Left cardiac atrium (tissue), 4 donors: ENCODE measurements at regions of chr17 and their contacts with region 1.

Region 1: DNA sequence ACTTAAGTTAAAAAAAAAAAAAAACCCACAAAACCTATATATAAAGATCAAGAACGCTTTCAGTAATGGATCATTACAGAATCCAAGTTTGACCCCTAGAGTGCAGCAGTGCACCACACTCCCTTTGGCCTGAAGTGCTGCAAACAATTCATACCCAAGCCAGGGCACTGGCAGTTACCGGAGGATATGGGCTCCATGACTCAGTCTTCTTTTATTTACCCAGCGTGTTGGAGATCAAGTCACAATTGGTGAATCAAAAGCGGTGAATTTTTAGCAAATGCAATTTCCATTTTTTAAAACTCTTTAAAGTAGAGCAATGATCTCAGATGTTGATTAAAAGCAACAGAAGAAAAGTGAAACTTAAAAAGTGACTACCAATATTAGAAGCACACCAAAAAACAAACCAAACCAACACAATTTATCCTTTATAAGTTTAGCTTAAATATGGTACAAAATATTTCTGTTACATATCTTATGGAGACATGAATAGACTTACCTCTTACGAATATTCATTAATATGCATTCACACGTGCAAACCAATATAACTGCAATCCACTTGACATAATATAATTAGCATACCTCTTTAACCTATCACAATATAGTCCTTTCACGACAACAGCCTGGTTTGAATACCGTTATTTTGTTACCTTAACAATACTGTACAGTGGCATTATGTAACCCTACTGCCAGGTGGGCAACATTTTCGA is 46.3 kb downstream of the ZNF652 start:
- DNase-seq: peak; percentile 61
- ATAC-seq: peak; percentile 99

Region 2: GRCh38 chr17:49101054-49101947 is 214.4 kb before region 1 on chr17:
- intact Hi-C with region 1: no loop called
- DNase-seq: no peak
- ATAC-seq: no peak

Region 3: DNA sequence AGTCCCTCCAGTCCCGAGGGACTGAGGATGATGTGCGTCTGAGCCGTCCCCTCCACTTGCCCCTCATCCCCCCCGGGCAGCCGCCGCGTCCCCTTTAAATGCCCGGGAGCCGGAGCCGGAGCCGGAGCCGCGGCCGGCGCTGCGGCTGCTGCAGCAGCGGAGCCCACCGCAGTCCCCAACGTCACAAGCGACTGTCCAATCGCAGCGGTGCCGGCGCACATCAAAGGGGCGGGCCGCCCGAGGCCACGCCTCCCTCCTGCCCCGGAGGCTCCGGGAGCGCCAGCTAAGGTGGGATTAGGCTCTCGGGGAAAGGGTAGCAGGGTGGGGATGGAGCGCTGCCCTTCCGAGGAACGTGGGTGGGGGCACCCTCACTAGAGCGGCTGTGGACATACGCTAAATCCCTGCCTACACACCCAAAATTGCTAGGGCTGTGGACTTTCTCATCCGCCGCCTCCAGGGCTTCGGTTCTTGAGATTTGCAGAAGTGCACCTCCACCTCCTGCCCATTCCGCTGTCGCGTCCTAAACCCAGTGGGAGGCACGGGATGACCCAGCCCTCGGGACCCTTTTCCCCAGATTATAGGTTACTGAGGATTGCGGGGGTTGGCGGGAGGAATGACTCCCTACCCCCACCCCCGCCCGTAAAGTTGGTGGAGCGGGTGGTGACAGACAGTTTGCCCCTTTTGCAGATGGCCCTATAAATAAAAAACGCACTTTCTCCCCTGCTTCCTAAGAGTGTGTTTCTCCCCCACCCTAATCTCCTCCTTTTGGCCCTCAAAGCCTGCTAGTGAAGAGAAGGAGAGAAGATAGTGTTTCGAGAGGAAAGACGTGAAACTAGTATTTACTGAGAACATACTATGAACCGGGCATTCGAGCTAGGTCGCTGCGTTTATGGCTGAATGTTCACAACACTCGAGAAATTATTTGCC is 84.8 kb before region 1 on chr17 and contains the start of gene PHOSPHO1:
- intact Hi-C with region 1: no loop called
- DNase-seq: peak; percentile 91
- ATAC-seq: peak; percentile 97
- total RNA-seq, gene PHOSPHO1: 0.31 to 0.41 TPM

Region 4: DNA sequence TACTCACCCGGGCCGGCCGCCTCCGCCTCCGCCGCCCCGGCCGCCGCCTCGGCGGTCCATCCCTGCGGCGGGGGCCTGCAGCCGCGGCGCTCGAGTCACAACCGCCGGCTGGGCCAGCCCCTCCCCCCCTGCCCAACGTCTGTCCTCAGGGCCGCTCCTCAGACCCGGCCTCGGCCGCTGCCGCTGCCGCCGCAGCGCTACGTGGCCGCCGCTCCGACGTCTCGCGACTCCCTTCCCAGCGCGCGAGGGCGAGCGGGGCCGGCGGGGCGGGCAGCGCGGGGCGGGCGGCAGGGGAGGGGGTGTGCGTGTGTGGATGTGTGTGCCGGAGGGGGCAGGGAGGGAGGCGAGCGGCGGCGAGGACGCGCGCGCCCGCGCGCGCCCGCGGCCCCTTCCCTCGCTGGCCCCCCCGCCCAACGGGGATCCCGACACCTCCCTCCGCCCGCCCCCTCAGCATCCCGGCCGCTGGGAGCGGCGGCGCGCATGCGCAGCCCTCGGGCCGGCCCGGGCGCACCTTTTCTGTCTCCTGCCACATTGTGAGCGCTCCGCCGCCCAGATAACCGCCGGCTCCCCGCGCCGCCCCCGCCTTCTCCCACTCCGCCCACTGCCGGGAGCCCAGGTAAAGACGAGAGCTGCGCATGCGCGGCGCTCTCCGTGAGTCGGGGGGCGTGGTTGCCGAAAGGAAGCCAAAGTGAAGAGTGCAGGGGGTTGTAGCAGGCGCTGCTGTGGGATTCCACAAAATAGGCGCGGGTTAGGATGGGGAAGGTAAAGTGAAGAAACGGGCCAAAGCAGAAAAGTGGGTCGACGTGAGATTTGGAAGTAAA is 46.4 kb after region 1 on chr17 and contains the start of gene ZNF652:
- intact Hi-C with region 1: loop called in 1 of 2 experiments (anchors 5 kb)
- DNase-seq: peak; percentile 90
- ATAC-seq: peak; percentile 94
- total RNA-seq, gene ZNF652: 23.4 to 25.2 TPM

Region 5: GRCh38 chr17:49390548-49391324 is 75.0 kb after region 1 on chr17:
- intact Hi-C with region 1: loop called (anchors 1 to 2 kb)
- DNase-seq: no peak
- ATAC-seq: peak; percentile 32 to 67

Region 6: GRCh38 chr17:49454050-49454449 is 138.3 kb after region 1 on chr17:
- intact Hi-C with region 1: no loop called
- DNase-seq: no peak
- ATAC-seq: peak in 1 of 2 donors; percentile 16

Region 7: DNA sequence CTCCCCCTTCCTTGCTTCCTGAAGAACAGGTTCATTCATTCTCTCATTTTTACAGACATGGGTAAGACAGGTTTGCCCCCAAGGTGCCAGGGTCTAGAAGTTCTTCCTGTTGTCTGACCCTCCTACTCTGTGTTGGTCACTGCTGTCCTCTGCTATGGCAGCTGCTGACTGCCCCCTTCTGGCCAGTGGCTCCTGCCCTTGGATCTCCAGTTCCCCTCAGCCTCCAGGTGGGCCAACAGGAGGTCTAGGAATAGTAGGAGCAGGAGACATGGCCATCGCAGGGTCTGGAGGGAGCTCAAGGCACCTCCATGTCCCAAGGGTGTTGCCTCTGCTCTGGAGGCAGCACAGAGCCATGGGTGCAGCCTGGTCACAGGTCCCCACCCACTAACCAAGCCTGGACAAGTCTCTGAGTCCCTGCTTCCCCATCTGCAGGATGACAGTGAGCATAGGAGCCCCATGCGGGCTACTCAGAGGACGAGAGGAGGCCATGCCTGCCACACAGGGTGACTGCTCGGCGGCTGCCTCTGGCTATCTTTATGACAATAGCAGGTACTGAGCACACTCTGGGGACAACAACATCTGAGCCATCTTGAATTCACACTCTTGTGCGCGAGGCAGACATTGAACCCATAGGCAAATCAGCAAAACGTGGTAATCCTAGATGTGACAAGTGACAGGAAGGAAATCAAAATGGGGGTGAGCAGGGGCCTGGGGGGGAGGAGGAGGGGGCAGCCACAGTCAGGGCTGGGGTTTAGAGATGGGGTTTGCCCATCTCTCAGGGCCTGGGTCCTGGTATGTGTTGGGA is 233.0 kb after region 1 on chr17:
- intact Hi-C with region 1: loop called (anchors 5 to 10 kb)
- DNase-seq: no peak
- ATAC-seq: peak; percentile 51 to 75